Breast epithelium (tissue), 4 donors: ENCODE measurements at regions of chr7 and their contacts with region 1.

Region 1: DNA sequence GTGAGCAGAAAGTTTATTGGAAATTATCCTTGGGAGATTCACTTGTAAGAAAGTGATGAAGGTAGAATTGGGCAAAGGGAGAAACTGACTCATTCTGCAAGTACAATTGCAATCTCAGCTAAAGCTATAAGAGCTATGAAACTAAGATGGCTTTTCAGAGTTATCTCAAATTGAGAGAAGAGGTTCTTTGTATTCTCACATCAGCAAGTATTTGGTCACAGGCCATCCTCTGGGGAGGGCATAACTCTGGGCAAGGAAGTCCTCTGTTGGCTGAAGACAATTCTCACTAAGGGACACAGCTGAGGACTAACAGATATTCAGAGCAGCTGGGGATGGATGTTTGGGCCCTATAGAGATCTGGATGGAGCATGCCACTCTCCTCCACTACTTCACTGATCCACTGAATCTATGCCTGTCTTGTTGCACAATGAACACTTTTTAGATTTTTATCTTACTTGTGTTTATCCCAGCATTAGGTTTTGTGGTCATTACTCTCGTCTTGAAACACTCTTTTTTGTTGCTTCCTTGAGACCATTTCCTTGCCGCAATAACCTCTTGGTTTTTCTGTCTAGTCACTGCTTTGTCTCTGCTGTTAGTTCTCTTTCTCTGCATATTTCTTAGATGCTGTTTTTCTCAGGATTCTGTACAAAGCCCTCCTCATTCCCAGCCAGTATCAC is 115.1 kb downstream of the GNAI1 start:
- DNase-seq: no peak
- H3K4me3 ChIP-seq: no peak overlapping the region
- H3K27ac ChIP-seq: no peak overlapping the region
- H3K4me1 ChIP-seq: no peaks in the 10 kb centered on the region
- H3K27me3 ChIP-seq: no peaks in the 10 kb centered on the region
- CTCF ChIP-seq: no peak
- POLR2A ChIP-seq: no peak

Region 2: GRCh38 chr7:79789584-79790345 is 460.0 kb before region 1 on chr7:
- intact Hi-C with region 1: loop called (anchors 5 kb)
- DNase-seq: no peak
- H3K4me3 ChIP-seq: no peak overlapping the region
- H3K27ac ChIP-seq: no peak overlapping the region
- H3K4me1 ChIP-seq: no peaks in the 10 kb centered on the region
- H3K27me3 ChIP-seq: no peaks in the 10 kb centered on the region
- CTCF ChIP-seq: no peak
- POLR2A ChIP-seq: no peak

Region 3: DNA sequence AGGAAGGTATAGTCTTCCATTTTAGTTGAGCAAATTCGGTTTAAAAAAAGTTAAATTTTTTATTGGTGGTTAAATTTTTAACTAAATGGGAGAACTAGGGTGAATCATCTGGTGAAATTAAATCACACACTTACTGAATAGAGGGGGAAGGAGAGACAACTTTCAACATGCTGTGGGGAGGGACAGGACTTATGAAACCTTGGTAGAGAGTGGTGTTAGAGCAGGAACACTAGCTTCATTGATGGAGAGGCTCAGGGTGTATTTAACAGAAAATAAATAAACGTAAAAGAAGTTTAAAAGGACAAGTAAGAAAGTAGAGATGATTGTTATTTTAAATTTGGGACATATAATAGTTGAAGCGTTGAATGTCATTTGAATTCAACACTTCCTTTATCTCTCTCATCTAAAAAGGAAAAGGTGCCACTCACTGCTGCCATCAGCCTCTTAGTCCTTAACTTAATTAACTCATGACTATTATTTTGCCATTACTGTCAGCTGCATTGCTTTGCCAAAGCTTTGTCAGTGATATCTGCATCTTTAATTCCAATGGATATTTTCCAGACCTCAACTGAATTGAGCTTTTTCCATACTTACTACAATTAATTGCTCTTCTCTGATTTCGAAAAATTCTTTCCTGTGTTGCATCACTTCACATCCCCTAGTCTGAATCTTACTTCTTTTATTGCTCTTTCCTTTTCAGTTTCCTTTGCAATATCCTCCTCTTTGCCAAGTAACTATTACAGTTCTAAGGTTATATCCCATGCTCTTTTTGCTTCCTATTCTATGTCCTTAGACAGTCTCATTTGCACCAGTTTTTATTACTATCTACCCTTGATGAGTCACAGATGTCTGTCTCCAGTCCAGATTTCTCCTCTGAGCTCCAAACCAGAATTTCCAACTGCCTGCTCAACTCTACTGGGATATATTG is 190.4 kb after region 1 on chr7:
- intact Hi-C with region 1: no loop called
- DNase-seq: no peak
- H3K4me3 ChIP-seq: no peak overlapping the region
- H3K27ac ChIP-seq: peak overlapping the region in 1 of 2 donors; percentile 52
- H3K4me1 ChIP-seq: no peaks in the 10 kb centered on the region
- H3K27me3 ChIP-seq: no peaks in the 10 kb centered on the region
- CTCF ChIP-seq: no peak
- POLR2A ChIP-seq: no peak